ENCODE measurements at regions of chr4 and their contacts with region 1.

Region 1: DNA sequence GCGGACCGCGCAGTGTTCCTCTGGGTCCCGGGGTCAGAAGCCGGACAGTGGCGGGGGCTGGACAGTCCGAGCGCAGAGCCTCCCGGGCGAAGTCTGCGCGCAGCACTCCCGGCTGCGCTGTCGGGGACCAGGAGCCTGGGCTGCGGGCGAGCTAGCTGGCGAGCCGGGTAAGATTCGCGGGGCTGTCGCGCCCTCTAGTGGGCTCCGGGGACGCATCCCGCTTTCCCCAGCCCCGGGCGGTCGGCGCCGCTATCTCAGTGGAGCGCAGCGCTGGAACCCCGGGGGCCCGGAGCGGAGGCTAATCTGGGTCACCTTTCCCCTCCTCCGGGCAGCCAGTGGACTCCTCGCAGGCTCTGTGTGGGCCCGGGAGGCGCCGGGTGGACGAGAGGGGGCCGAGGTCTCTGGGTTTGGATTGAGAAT is 4.2 kb downstream of the PDGFRA start:
- DNase-seq: peak; percentile 96

Region 2: DNA sequence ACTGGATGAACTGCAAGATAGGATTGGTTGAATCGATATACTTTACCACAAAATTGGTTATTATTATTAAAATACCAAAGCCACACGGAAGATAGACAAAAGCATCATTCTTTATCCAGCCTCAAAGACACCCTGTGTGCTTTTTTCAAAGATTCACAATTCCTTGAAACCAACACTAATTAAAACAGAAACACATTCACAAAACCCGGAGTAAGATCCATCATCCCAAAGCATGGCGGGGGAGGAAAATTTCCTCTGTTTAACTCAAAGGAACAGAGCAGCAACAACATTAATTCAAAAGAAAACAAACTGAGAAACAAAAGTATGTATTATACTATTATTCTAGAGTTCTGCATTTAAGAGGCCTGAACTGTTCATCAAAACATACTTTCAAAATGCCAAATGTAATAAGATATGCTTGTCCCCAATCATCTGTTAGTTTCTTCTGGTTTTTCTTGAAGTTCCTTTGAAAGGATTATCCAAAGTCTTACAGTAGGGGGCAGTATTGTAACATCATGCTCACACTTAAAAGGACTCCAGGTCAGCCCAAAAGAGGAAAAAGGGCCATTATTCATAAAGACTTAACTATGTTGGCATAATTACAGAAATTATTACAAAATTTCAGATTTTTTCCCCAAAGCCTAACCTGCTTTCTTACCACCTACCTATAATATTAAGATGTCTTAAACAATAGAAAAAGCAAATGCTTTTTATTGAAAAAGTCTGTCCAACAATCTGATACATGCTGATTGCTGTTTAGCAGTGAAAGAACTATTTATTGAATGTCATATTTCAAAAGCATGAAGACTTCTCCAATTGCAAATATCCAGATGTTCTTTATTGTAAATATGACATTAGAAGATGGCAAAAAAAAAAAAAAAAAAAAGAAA is 1036.2 kb before region 1 on chr4:
- intact Hi-C with region 1: loop called (anchors 5 kb)
- DNase-seq: no peak

Measured in posterior vena cava (tissue), 2 donors.